Activated T-helper 2 cell treated with anti-CD3 and anti-CD28 coated beads, Interferon-gamma antibody, Interleukin-2, Interleukin-4, amounts not matched to agents 10 μg/mL and 5 μg/mL and 100 μg/mL, durations not matched to agents 14 hours and 24 hours and 36 hours (primary cell): ENCODE measurements at regions of chr10 and their contacts with region 1.

Region 1: GRCh38 chr10:29590915-29591650 is 43.7 kb downstream of the SVIL start:
- DNase-seq: no peak
- H3K4me3 Mint-ChIP-seq: no peak overlapping the region
- H3K27ac Mint-ChIP-seq: peak overlapping the region; percentile 83
- H3K4me1 Mint-ChIP-seq: peaks cover 9% of the 10 kb centered on the region
- H3K27me3 Mint-ChIP-seq: no peaks in the 10 kb centered on the region

Region 2: DNA sequence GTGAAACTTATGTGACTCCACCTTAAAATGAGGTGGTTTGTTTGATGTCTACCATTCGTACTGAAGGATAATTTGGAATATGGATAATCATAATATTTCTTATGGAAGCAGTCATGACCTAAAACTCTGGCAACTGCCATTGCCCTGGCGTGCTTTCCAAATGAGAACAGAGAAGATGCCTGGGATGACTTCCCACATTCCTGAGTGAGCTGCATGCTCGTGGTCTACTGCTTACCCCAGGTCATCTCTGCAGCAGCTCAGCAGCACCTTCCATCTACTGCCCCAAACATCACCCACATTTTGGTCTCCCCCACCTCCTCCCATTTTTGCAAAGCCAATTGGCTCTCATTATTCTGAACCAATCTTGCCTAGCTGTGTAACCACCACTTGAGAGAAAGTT is 262.1 kb before region 1 on chr10:
- intact Hi-C with region 1: no loop called
- DNase-seq: no peak
- H3K4me3 Mint-ChIP-seq: no peak overlapping the region
- H3K27ac Mint-ChIP-seq: no peak overlapping the region
- H3K4me1 Mint-ChIP-seq: no peaks in the 10 kb centered on the region
- H3K27me3 Mint-ChIP-seq: peaks cover 5% of the 10 kb centered on the region

Region 3: DNA sequence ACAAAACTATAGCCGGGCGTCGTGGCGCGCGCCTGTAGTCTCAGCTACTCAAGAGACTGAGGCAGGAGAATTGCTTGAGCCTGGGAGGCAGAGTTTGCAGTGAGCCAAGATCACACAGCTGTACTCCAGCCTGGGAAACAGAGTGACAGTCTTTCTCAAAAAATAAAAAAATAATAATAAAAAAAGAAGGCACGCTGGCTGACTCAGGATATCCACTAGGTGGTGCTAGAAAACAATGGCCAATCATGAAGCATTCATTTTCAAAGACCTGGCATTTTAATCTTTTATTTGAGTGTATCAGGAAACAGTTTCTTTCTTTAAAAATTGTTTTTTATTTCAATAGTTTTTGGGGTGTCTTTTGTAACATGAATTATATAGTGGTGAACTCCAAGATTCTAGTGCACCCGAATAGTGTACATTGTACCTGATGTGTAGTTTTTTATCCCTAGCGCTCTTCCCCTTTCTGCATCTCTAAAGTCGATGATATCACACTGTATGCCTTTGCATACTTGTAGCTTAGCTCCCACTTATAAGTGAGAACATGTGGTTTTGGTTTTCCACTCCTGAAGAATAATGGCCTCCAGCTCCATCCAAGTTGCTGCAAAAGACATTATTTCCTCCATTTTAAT is 213.6 kb before region 1 on chr10:
- intact Hi-C with region 1: loop called (anchors 5 kb)
- DNase-seq: no peak
- H3K4me3 Mint-ChIP-seq: no peak overlapping the region
- H3K27ac Mint-ChIP-seq: no peak overlapping the region
- H3K4me1 Mint-ChIP-seq: peaks cover 4% of the 10 kb centered on the region
- H3K27me3 Mint-ChIP-seq: peaks cover 10% of the 10 kb centered on the region

Region 4: GRCh38 chr10:29554660-29555059 is 36.4 kb before region 1 on chr10:
- intact Hi-C with region 1: loop called (anchors 5 kb)
- DNase-seq: no peak
- H3K4me3 Mint-ChIP-seq: no peak overlapping the region
- H3K27ac Mint-ChIP-seq: peak overlapping the region; percentile 88
- H3K4me1 Mint-ChIP-seq: peaks cover 15% of the 10 kb centered on the region
- H3K27me3 Mint-ChIP-seq: no peaks in the 10 kb centered on the region

Region 5: GRCh38 chr10:29735596-29736318 is 144.7 kb after region 1 on chr10:
- intact Hi-C with region 1: loop called (anchors 1 kb)
- DNase-seq: peak; percentile 79
- H3K4me3 Mint-ChIP-seq: peak overlapping the region; percentile 77
- H3K27ac Mint-ChIP-seq: peak overlapping the region; percentile 66
- H3K4me1 Mint-ChIP-seq: peaks cover 12% of the 10 kb centered on the region
- H3K27me3 Mint-ChIP-seq: peaks cover 36% of the 10 kb centered on the region

Region 6: DNA sequence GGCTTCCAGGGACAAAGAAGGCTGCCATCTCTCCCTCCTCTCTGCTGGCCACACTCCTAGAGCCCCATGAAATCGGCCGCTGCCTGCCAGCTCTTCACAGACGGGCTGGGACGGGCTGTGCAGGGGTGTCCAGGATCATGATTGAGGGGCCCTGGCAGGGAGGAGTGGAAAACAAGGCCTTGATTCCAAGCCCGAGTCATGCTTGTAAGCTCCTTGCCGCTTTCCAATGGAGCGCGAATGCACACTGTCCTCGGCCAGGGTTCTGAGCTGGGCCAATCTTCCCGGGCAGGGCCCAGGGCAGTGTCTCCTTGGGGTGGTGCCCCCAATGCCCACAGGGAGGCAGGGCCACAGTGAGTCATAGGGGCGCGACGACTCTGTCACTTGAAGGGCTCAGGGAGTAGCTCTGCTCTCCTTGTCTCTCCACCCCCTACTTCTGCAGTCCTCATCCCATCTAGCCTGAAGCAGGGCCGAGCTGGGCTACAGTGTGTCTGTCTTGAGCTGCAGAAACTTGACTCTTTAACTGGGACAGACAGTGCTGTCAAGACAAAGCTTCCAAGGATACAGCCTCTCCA is 229.9 kb after region 1 on chr10:
- intact Hi-C with region 1: no loop called
- DNase-seq: no peak
- H3K4me3 Mint-ChIP-seq: no peak overlapping the region
- H3K27ac Mint-ChIP-seq: no peak overlapping the region
- H3K4me1 Mint-ChIP-seq: no peaks in the 10 kb centered on the region
- H3K27me3 Mint-ChIP-seq: peaks cover 6% of the 10 kb centered on the region